Sigmoid colon (tissue), 7 donors: ENCODE measurements at regions of chr14 and their contacts with region 1.

Region 1: GRCh38 chr14:20613094-20614037 is 22.2 kb upstream of the RNASE12 start:
- DNase-seq: peak; percentile 93
- H3K4me3 ChIP-seq: peak overlapping the region; percentile 38 to 56 (median 52)
- H3K27ac ChIP-seq: peak overlapping the region; percentile 73 to 86 (median 78)
- H3K4me1 ChIP-seq: peaks cover 3 to 21% (median 13%) of the 10 kb centered on the region in 4 donors
- H3K27me3 ChIP-seq: no peaks in the 10 kb centered on the region
- CTCF ChIP-seq: peak; percentile 77 to 98 (median 94)
- EP300 ChIP-seq: no peak
- POLR2A ChIP-seq: no peak

Region 2: GRCh38 chr14:20343092-20343861 is 270.1 kb before region 1 on chr14 and contains the start of gene PARP2:
- intact Hi-C with region 1: loop called (anchors 5 kb)
- DNase-seq: peak; percentile 99
- H3K4me3 ChIP-seq: peak within 1 kb of the TSS; percentile 63 to 88 (median 72)
- H3K27ac ChIP-seq: peak within 1 kb of the TSS; percentile 92 to 95 (median 94)
- H3K4me1 ChIP-seq: peaks cover 0 to 11% (median 8%) of the 10 kb centered on the region in 4 donors
- H3K27me3 ChIP-seq: no peaks in the 10 kb centered on the region
- CTCF ChIP-seq: peak in 1 of 4 experiments; percentile 4
- EP300 ChIP-seq: peak in 1 of 4 donors; percentile 64
- POLR2A ChIP-seq: peak; percentile 65 to 77
- total RNA-seq, gene PARP2: 7.4 to 14.3 (median 10.6) TPM

Region 3: DNA sequence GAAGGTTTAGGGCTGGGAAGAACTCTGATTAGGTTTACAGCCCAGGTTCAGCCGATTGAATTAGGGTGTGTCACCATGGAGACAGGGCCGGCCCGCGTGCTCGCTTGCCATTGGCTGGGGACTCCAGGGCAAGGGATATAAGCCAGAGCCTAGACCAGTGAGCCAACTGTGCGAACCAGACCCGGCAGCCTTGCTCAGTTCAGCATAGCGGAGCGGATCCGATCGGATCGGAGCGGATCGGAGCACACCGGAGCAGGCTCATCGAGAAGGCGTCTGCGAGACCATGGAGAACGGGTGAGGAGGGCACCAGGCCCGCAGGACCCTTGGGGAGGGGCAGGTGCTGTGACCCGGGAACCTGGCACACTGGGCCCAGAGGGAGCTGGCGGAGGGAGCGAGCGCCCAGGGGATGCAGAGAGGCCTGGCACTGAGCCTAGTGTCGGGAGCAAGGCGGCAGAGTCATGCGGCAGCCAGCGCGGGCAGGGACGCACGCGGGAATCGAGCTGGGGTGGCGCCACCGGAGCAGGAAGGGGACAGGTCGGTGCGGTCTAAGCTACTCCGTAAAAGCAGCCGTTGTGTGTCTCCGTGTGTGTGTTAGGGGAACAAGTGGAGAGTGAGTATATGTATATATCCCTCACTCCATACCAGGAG is 144.0 kb before region 1 on chr14 and contains the start of gene PNP:
- intact Hi-C with region 1: loop called (anchors 2 kb)
- DNase-seq: peak; percentile 96
- H3K4me3 ChIP-seq: peak within 1 kb of the TSS; percentile 52 to 81 (median 74)
- H3K27ac ChIP-seq: peak within 1 kb of the TSS; percentile 84 to 91 (median 89)
- H3K4me1 ChIP-seq: peaks cover 0 to 19% (median 18%) of the 10 kb centered on the region in 4 donors
- H3K27me3 ChIP-seq: no peaks in the 10 kb centered on the region
- CTCF ChIP-seq: no peak
- EP300 ChIP-seq: no peak
- POLR2A ChIP-seq: peak; percentile 88 to 90
- total RNA-seq, gene PNP: 5.5 to 32.3 (median 10.6) TPM

Region 4: GRCh38 chr14:20568393-20568792 is 45.0 kb before region 1 on chr14:
- intact Hi-C with region 1: no loop called
- DNase-seq: no peak
- H3K4me3 ChIP-seq: no peak overlapping the region
- H3K27ac ChIP-seq: no peak overlapping the region
- H3K4me1 ChIP-seq: no peaks in the 10 kb centered on the region
- H3K27me3 ChIP-seq: no peaks in the 10 kb centered on the region
- CTCF ChIP-seq: no peak
- EP300 ChIP-seq: no peak
- POLR2A ChIP-seq: no peak

Region 5: DNA sequence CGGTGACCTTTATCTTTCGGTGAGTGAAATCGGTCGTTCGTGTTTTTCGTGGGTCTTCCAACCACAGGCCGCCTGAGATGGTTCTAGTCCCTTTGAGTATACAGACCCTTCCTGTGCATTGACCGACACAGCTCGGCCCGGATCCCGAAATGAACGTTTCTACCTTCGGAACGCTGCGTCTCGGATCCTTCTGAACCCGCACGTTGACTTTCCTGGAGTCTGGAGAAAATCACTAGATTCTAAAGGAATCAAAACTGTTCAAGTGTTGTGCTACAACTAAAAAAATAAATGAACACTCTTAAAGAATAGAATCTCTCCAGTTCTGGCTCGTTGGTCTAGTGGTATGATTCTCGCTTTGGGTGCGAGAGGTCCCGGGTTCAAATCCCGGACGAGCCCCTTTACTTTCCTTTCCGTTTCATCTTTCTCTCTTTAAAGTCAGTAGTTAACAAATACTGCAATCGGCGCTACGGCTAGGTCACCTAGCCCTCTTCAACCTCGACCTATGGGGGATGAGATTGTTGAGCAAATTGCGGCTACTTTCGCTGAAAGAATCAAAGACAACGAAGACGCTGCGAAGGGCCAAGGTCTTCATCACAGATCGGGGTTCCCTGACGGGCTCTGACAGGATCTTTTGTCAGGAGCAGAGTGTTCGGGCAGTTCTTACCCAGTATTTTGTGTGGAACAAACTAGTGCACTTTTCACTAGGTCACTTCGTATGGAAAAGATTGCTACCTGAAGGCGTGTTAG is 19.5 kb after region 1 on chr14:
- intact Hi-C with region 1: loop called (anchors 2 kb)
- DNase-seq: peak; percentile 75
- H3K4me3 ChIP-seq: peak overlapping the region; percentile 12 to 43 (median 28)
- H3K27ac ChIP-seq: peak overlapping the region in 3 of 4 donors; percentile 1 to 56 (median 12)
- H3K4me1 ChIP-seq: peaks cover 0 to 31% (median 29%) of the 10 kb centered on the region in 4 donors
- H3K27me3 ChIP-seq: peaks cover 0 to 5% (median 0%) of the 10 kb centered on the region in 3 donors
- CTCF ChIP-seq: no peak
- EP300 ChIP-seq: no peak
- POLR2A ChIP-seq: no peak

Region 6: GRCh38 chr14:21092273-21093011 is 479.1 kb after region 1 on chr14:
- intact Hi-C with region 1: loop called (anchors 10 kb)
- DNase-seq: peak; percentile 91
- H3K4me3 ChIP-seq: no peak overlapping the region
- H3K27ac ChIP-seq: peak overlapping the region; percentile 39 to 58 (median 56)
- H3K4me1 ChIP-seq: peaks cover 0 to 50% (median 44%) of the 10 kb centered on the region in 4 donors
- H3K27me3 ChIP-seq: no peaks in the 10 kb centered on the region
- CTCF ChIP-seq: peak; percentile 100
- EP300 ChIP-seq: no peak
- POLR2A ChIP-seq: no peak